CD4-positive, alpha-beta T cell (primary cell): ENCODE measurements at regions of chr1 and their contacts with region 1.

Region 1: GRCh38 chr1:86704458-86704971 is at the start of gene SH3GLB1:
- DNase-seq: peak; percentile 83 to 95 (median 86)
- ATAC-seq: peak; percentile 89
- H3K4me3 ChIP-seq: peak within 1 kb of the TSS; percentile 68
- H3K4me3 Mint-ChIP-seq: peak within 1 kb of the TSS; percentile 99
- H3K27ac ChIP-seq: peak within 1 kb of the TSS; percentile 84 to 86
- H3K27ac Mint-ChIP-seq: peak within 1 kb of the TSS; percentile 99
- H3K4me1 ChIP-seq: peaks cover 18% of the 10 kb centered on the region
- H3K4me1 Mint-ChIP-seq: peaks cover 60% of the 10 kb centered on the region
- H3K27me3 ChIP-seq: no peaks in the 10 kb centered on the region
- H3K27me3 Mint-ChIP-seq: no peaks in the 10 kb centered on the region
- CTCF ChIP-seq: peak; percentile 98
- total RNA-seq, gene SH3GLB1: 50.6 to 52.3 TPM

Region 2: DNA sequence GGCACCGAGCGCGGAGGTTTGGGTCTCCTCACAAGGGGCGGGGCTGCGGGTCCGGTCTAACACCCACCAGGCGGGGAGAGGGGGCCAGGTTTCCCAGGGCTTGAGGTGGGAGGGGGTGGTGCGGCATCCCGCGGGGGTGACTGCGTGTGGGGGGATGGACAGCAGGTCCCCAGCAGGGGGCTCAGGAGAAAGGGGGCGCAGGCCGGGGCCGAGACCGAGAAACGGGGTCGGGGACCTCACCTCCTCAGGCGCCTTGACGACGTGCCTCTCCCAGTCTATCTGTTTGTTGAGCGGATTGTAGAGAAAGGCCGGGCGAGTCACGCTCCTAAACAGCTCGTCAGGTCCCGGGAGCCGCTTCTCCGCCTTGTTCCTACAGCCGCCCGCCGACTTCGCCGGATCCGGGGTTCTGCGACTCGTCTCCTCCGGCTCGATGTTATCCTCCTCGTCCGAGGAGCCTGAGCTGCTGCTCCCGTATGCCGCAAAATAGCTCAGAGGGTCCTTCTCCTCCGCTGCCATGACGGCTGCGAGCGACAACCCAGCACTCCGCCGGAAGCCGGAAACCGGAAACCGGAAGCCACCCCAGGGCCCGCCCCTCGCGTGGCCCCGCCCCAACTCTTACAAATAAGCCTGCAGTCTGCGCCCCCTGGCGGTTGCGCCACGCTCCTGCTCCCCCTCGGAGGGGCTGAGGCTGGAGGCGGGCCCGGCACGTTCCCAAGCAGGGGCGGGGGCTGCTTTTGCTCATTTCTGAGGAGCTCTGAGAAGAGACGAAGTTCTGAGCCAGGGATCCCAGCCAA is 1445.2 kb before region 1 on chr1 and contains the start of gene C1orf52:
- CTCF ChIA-PET with region 1: no interaction called
- POLR2A ChIA-PET with region 1: no interaction called
- intact Hi-C with region 1: loop called in 1 of 2 experiments (anchors 10 kb)
- DNase-seq: peak; percentile 92 to 99 (median 96)
- ATAC-seq: peak; percentile 93
- H3K4me3 ChIP-seq: peak within 1 kb of the TSS; percentile 88
- H3K4me3 Mint-ChIP-seq: peak within 1 kb of the TSS; percentile 99
- H3K27ac ChIP-seq: peak within 1 kb of the TSS; percentile 47 to 81
- H3K27ac Mint-ChIP-seq: peak within 1 kb of the TSS; percentile 95
- H3K4me1 ChIP-seq: peaks cover 21% of the 10 kb centered on the region
- H3K4me1 Mint-ChIP-seq: peaks cover 41% of the 10 kb centered on the region
- H3K27me3 ChIP-seq: no peaks in the 10 kb centered on the region
- H3K27me3 Mint-ChIP-seq: no peaks in the 10 kb centered on the region
- CTCF ChIP-seq: peak; percentile 97
- total RNA-seq, gene C1orf52: 62.4 to 66.6 TPM

Region 3: GRCh38 chr1:86380257-86380861 is 324.2 kb before region 1 on chr1:
- CTCF ChIA-PET with region 1: interaction called, 7 read pairs
- POLR2A ChIA-PET with region 1: interaction called, 8 read pairs
- intact Hi-C with region 1: loop called in 1 of 2 experiments (anchors 10 kb)
- DNase-seq: peak in 4 of 14 experiments; percentile 38 to 80 (median 72)
- ATAC-seq: peak; percentile 86
- H3K4me3 ChIP-seq: no peak overlapping the region
- H3K4me3 Mint-ChIP-seq: no peak overlapping the region
- H3K27ac ChIP-seq: no peak overlapping the region
- H3K27ac Mint-ChIP-seq: peak overlapping the region; percentile 69
- H3K4me1 ChIP-seq: no peaks in the 10 kb centered on the region
- H3K4me1 Mint-ChIP-seq: peaks cover 29% of the 10 kb centered on the region
- H3K27me3 ChIP-seq: no peaks in the 10 kb centered on the region
- H3K27me3 Mint-ChIP-seq: no peaks in the 10 kb centered on the region
- CTCF ChIP-seq: peak; percentile 95

Region 4: GRCh38 chr1:86466986-86467385 is 237.5 kb before region 1 on chr1:
- CTCF ChIA-PET with region 1: no interaction called
- POLR2A ChIA-PET with region 1: no interaction called
- intact Hi-C with region 1: no loop called
- DNase-seq: no peak
- ATAC-seq: no peak
- H3K4me3 ChIP-seq: no peak overlapping the region
- H3K4me3 Mint-ChIP-seq: no peak overlapping the region
- H3K27ac ChIP-seq: no peak overlapping the region
- H3K27ac Mint-ChIP-seq: no peak overlapping the region
- H3K4me1 ChIP-seq: no peaks in the 10 kb centered on the region
- H3K4me1 Mint-ChIP-seq: no peaks in the 10 kb centered on the region
- H3K27me3 ChIP-seq: peaks cover under 1 to 2% of the 10 kb centered on the region in 2 experiments
- H3K27me3 Mint-ChIP-seq: peaks cover 2% of the 10 kb centered on the region
- CTCF ChIP-seq: no peak

Region 5: DNA sequence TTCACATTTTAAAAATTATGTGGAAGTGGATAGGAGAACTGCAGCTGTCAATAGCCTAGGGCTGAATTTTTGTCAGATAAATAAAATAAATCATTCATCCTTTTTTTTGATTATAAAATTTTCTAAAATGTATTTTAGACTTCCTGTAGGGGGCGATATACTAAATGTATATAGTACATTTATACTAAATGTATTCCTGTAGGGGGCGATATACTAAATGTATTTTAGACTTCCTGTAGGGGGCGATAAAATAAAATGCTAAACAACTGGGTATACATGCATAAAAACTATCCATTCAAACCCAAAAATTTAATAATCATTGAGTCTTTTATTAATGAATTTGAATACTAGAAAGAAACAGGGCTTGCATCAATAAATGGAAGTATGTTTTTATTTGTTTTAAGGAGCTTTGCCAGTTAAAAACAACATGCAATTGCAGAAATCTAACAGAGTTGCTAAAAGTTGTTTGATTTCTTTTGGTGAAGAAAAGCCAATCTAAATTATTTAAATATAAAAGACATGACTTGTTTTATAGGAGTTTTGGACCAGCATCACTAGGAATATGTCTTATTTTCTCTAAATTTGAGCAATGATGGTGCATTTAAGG is 204.4 kb before region 1 on chr1:
- CTCF ChIA-PET with region 1: interaction called, 13 read pairs
- POLR2A ChIA-PET with region 1: interaction called, 6 read pairs
- intact Hi-C with region 1: loop called in 1 of 2 experiments (anchors 10 kb)
- DNase-seq: peak in 3 of 14 experiments; percentile 55 to 79 (median 57)
- ATAC-seq: peak; percentile 61
- H3K4me3 ChIP-seq: no peak overlapping the region
- H3K4me3 Mint-ChIP-seq: no peak overlapping the region
- H3K27ac ChIP-seq: no peak overlapping the region
- H3K27ac Mint-ChIP-seq: no peak overlapping the region
- H3K4me1 ChIP-seq: peaks cover 7% of the 10 kb centered on the region
- H3K4me1 Mint-ChIP-seq: peaks cover 17% of the 10 kb centered on the region
- H3K27me3 ChIP-seq: peaks cover 0 to 3% of the 10 kb centered on the region in 2 experiments
- H3K27me3 Mint-ChIP-seq: peaks cover 23% of the 10 kb centered on the region
- CTCF ChIP-seq: peak; percentile 100

Region 6: GRCh38 chr1:86573763-86574484 is 130.6 kb before region 1 on chr1:
- CTCF ChIA-PET with region 1: no interaction called
- POLR2A ChIA-PET with region 1: no interaction called
- intact Hi-C with region 1: no loop called
- DNase-seq: no peak
- ATAC-seq: no peak
- H3K4me3 ChIP-seq: no peak overlapping the region
- H3K4me3 Mint-ChIP-seq: no peak overlapping the region
- H3K27ac ChIP-seq: no peak overlapping the region
- H3K27ac Mint-ChIP-seq: no peak overlapping the region
- H3K4me1 ChIP-seq: no peaks in the 10 kb centered on the region
- H3K4me1 Mint-ChIP-seq: no peaks in the 10 kb centered on the region
- H3K27me3 ChIP-seq: no peaks in the 10 kb centered on the region
- H3K27me3 Mint-ChIP-seq: peaks cover 8% of the 10 kb centered on the region
- CTCF ChIP-seq: no peak

Region 7: GRCh38 chr1:86753700-86754099 is 49.2 kb after region 1 on chr1:
- CTCF ChIA-PET with region 1: interaction called, 14 read pairs
- POLR2A ChIA-PET with region 1: interaction called, 6 read pairs
- intact Hi-C with region 1: no loop called
- DNase-seq: peak in 4 of 14 experiments; percentile 6 to 33 (median 16)
- ATAC-seq: peak; percentile 46
- H3K4me3 ChIP-seq: no peak overlapping the region
- H3K4me3 Mint-ChIP-seq: no peak overlapping the region
- H3K27ac ChIP-seq: no peak overlapping the region
- H3K27ac Mint-ChIP-seq: no peak overlapping the region
- H3K4me1 ChIP-seq: no peaks in the 10 kb centered on the region
- H3K4me1 Mint-ChIP-seq: no peaks in the 10 kb centered on the region
- H3K27me3 ChIP-seq: peaks cover 0 to 3% of the 10 kb centered on the region in 2 experiments
- H3K27me3 Mint-ChIP-seq: peaks cover 21% of the 10 kb centered on the region
- CTCF ChIP-seq: no peak

Region 8: GRCh38 chr1:86933562-86934377 is 229.3 kb after region 1 on chr1:
- CTCF ChIA-PET with region 1: no interaction called
- POLR2A ChIA-PET with region 1: no interaction called
- intact Hi-C with region 1: no loop called
- DNase-seq: peak in 2 of 14 experiments; percentile 15 to 29
- ATAC-seq: peak; percentile 70
- H3K4me3 ChIP-seq: no peak overlapping the region
- H3K4me3 Mint-ChIP-seq: no peak overlapping the region
- H3K27ac ChIP-seq: no peak overlapping the region
- H3K27ac Mint-ChIP-seq: peak overlapping the region; percentile 2
- H3K4me1 ChIP-seq: no peaks in the 10 kb centered on the region
- H3K4me1 Mint-ChIP-seq: peaks cover 42% of the 10 kb centered on the region
- H3K27me3 ChIP-seq: no peaks in the 10 kb centered on the region
- H3K27me3 Mint-ChIP-seq: no peaks in the 10 kb centered on the region
- CTCF ChIP-seq: no peak

Region 9: DNA sequence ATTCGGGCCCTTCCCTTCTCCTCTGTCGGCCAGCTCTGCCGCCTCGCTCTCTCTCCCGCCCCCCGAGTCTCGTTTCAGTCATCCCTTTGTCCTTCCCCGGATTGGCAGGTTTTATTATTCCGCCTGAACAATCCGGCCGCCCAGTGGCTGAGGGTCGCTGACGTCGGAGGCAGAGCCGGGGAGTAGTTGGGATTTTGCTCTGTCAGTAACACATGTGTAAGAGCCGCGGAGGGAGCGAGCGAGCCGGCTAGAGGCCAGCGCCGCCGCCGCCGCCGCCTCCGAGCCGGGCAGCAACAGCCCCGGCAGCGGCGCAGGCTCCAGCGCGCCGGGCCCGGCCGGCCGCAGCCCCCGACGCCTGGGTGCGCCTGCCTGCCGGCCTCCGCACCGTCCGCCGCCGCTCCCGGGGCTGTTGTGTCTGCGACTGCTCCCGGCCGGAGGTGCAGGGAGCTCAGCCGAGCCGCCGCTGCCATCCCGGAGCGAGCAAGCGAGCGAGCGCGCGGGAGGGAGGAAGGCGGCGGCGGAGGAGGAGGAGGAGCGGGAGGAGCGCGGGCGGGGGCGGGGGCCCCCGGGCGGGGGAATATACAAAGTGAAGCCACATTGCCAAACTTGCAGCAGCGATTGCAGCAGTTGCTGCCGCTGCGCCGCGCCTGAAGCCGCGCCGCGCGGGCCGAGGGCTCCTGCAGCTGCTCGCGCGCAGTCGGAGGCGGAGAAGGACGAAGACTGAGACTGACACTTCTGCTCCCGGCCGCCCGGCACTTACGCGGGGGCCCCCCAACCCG is 623.9 kb after region 1 on chr1 and contains the start of gene LMO4:
- CTCF ChIA-PET with region 1: interaction called, 4 read pairs
- POLR2A ChIA-PET with region 1: interaction called, 13 read pairs
- intact Hi-C with region 1: loop called in 1 of 2 experiments (anchors 10 kb)
- DNase-seq: peak; percentile 51 to 92 (median 68)
- ATAC-seq: peak; percentile 56
- H3K4me3 ChIP-seq: peak within 1 kb of the TSS; percentile 81
- H3K4me3 Mint-ChIP-seq: peak within 1 kb of the TSS; percentile 98
- H3K27ac ChIP-seq: peak within 1 kb of the TSS; percentile 49 to 51
- H3K27ac Mint-ChIP-seq: peak within 1 kb of the TSS; percentile 88
- H3K4me1 ChIP-seq: peaks cover 34% of the 10 kb centered on the region
- H3K4me1 Mint-ChIP-seq: peaks cover 56% of the 10 kb centered on the region
- H3K27me3 ChIP-seq: peaks cover 0 to 7% of the 10 kb centered on the region in 2 experiments
- H3K27me3 Mint-ChIP-seq: peaks cover 21% of the 10 kb centered on the region
- CTCF ChIP-seq: no peak
- total RNA-seq, gene LMO4: 16.0 to 18.2 TPM